ENCODE measurements at regions of chr13 and their contacts with region 1.

Region 1: GRCh38 chr13:21884965-21885567 is 214.2 kb downstream of the FGF9 start:
- ATAC-seq: no peak
- H3K4me3 ChIP-seq: no peak overlapping the region
- H3K27ac ChIP-seq: no peak overlapping the region
- H3K4me1 ChIP-seq: no peaks in the 10 kb centered on the region

Region 2: DNA sequence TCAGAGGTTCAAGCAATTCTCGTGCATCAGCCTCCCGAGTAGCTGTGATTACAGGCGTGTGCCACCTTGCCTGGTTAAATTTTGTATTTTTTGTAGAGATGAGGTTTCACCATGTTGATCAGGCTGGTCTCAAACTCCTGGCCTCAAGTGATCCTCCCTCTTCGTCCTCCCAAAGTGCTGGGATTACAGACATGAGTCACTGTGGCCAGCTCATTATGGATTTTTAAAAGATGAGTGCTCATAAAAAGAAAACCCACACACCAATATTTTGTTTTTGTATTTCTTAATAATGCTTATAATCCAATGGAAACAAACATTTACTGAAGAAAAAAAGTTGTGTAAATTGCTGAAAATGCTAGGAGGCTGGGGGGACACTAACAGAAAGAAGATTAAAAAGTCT is 276.1 kb before region 1 on chr13:
- in situ Hi-C with region 1: no loop called
- ATAC-seq: no peak
- H3K4me3 ChIP-seq: no peak overlapping the region
- H3K27ac ChIP-seq: no peak overlapping the region
- H3K4me1 ChIP-seq: peaks cover 12 to 20% of the 10 kb centered on the region in 2 donors

Region 3: GRCh38 chr13:21749410-21749809 is 135.7 kb before region 1 on chr13:
- in situ Hi-C with region 1: no loop called
- ATAC-seq: no peak
- H3K4me3 ChIP-seq: no peak overlapping the region
- H3K27ac ChIP-seq: no peak overlapping the region
- H3K4me1 ChIP-seq: peaks cover 0 to 9% of the 10 kb centered on the region in 2 donors

Region 4: GRCh38 chr13:21986602-21987001 is 101.5 kb after region 1 on chr13:
- in situ Hi-C with region 1: loop called in 1 of 9 experiments (anchors 25 kb)
- ATAC-seq: no peak
- H3K4me3 ChIP-seq: no peak overlapping the region
- H3K27ac ChIP-seq: no peak overlapping the region
- H3K4me1 ChIP-seq: no peaks in the 10 kb centered on the region